Posterior cingulate gyrus (tissue), 11 donors: ENCODE measurements at regions of chr6 and their contacts with region 1.

Region 1: DNA sequence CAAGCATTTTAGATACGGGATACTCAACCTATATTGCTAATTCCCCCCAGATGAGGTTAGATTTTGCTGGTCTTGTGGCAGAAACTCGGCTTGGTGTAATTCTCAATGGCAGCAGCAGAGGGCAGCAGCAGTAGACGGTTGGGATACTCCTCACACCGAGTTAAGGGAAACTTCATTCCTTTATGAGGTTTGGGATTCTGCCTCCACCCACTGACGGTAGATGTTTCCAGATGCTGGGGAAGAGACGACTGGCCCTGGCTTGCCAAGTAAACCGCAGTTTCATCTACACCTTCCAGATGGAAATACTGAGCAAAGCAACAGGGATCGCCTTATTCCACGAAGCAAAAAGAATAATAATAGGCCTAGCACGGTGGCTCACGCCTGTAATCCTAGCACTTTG is 8.2 kb upstream of the TBC1D7 start:
- DNase-seq: peak; percentile 66 to 97 (median 91)

Region 2: DNA sequence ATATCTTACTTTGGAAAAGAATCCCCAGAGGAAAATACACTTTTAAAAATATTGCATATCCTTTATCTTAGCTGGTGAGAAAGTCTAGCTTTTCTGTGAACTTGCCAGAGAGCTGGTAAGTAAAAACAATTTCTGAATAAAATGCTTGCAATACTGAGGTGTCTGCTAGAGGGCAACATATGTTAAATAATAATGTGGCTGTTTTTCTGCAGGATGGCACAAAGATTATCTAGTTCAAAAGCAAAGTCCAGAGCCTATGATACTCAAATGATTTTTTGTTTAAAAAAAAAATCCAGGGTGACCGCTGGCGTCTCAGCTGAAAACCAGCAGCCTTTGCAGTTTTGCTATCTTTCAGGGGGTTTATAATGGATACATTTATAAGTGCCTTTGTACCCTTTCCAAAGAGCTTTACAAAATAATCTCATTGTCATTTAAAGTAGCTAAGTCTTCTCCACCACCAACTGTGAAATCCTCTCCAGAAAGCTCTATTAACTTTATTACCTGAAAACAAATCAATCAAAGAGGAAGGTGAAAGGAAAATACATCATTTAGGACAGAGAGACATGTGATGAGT is 425.1 kb before region 1 on chr6:
- intact Hi-C with region 1: loop called (anchors 2 kb)
- DNase-seq: no peak

Region 3: GRCh38 chr6:13183415-13184088 is 153.0 kb before region 1 on chr6:
- intact Hi-C with region 1: no loop called
- DNase-seq: no peak

Region 4: GRCh38 chr6:13194852-13195251 is 141.7 kb before region 1 on chr6:
- intact Hi-C with region 1: loop called (anchors 2 kb)
- DNase-seq: peak in 7 of 10 donors; percentile 26 to 83 (median 51)

Region 5: DNA sequence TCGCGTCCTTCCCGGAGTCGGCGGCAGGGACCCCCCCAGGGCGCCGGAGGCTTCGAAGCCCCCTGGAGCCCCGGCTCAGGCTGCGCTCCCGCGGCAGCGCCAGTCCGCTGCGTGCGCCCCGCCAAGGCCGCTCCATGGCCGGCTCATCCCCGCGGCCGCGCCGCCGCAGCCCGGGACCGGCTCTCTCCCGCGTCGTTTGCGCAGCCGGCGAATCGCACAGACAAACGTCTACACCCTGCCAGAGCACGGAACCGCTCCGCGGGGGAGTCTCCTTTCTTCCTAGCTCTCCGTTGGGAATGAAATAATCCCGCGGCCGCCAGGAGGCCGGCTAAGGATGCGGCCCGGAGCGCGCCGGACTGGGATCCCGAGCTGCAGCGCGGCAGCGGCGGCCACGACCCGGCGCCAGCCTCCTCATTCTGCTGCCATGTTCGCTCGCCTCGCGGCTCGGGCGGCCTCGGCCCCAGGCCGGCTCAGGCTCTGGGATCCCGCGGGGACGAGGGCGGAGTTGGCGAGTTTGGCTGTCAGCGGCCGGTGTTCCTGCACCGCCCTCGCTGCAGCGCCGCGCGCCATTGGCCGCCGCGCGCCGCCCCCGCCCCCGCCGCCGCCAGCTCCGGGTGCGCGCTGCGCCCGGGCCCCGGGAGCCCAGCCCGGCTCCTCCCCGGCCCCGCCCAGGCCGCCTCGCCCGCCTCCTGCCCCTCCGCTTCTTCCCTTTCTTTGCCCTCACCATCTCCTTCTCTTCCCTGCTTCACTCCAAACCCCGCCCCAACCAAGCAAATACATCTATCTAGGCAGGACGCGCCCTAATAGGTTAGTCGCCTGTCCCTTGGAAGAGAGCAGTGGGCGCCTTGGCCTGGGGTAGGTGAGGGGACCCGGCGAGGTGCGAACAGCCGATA is 150.8 kb after region 1 on chr6 and contains the start of gene GFOD1:
- intact Hi-C with region 1: loop called (anchors 2 kb)
- DNase-seq: peak; percentile 70 to 98 (median 86)

Region 6: DNA sequence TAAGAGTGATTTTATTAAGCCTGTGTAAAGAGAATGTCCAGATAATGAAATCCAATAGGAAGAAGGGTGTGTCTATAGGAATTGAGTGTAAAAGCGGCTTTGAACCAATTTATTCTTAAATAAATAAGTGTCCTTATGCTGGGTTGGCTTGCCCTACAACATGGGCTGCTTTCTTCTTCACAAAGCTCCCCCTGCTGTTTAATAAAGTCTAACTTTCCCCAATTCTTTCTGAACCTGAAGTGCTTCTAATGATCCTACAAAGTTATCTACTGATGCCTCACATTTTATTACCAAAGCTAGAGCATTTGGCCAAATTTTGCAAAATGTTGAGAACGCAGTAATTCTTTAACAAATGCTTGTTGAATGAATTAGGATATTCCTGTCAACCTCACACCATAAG is 201.5 kb after region 1 on chr6:
- intact Hi-C with region 1: loop called (anchors 5 kb)
- DNase-seq: no peak

Region 7: GRCh38 chr6:13574149-13574570 is 237.6 kb after region 1 on chr6:
- intact Hi-C with region 1: loop called (anchors 1 kb)
- DNase-seq: peak; percentile 78 to 98 (median 85)

Region 8: DNA sequence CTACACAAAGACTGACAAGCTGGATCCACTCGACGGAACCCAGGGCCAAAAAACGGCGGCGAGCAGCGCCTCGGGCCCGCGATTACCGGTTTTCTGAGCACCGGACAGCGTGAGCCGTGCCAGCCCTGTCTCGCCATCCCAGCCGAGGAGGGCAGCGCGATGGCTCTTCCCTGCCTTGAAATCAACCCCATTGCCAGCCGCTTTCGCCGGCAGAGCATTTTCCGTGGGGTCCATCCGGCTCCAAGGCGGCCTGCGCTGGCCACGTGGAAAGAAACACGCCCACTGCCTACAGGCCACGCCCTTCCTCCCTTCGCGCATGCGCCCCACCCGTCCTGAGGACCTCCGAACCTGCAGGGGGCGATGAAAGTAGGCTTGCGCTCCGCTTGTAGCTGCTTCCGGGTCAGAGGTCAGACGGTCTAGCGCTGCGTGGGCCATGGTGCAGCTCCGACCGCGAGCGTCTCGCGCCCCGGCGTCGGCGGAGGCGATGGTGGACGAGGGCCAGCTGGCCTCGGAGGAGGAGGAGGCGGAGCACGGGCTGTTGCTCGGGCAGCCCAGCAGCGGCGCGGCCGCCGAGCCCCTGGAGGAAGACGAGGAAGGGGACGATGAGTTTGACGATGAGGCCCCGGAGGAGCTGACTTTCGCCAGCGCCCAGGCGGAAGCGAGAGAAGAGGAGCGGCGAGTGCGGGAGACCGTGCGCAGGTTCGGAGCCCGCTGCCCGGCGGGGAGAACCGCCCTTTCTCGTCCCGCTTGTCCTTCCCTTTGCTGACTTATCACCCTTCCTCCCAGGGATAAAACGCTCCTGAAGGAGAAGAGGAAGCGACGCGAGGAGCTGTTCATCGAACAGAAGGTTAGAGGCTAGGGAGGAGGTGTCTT is 278.6 kb after region 1 on chr6 and contains the start of gene NOL7:
- intact Hi-C with region 1: loop called (anchors 1 kb)
- DNase-seq: peak; percentile 95 to 99 (median 97)